Dendritic cell treated with granulocyte-macrophage colony-stimulating factor and Interleukin-4, amounts not matched to agents 40 ng/mL and 50 ng/mL, for 4 days (primary cell): ENCODE measurements at regions of chr6 and their contacts with region 1.

Region 1: GRCh38 chr6:75284632-75285286 is at the start of gene TMEM30A:
- H3K4me3 Mint-ChIP-seq: no peak within 1 kb of the TSS
- H3K27ac Mint-ChIP-seq: no peak within 1 kb of the TSS
- H3K4me1 Mint-ChIP-seq: peaks cover 38% of the 10 kb centered on the region
- H3K27me3 Mint-ChIP-seq: no peaks in the 10 kb centered on the region

Region 2: GRCh38 chr6:75243333-75244062 is 41.3 kb before region 1 on chr6 and contains the start of gene COX7A2:
- intact Hi-C with region 1: loop called (anchors 1 kb)
- H3K4me3 Mint-ChIP-seq: peak within 1 kb of the TSS; percentile 98
- H3K27ac Mint-ChIP-seq: peak within 1 kb of the TSS; percentile 99
- H3K4me1 Mint-ChIP-seq: peaks cover 24% of the 10 kb centered on the region
- H3K27me3 Mint-ChIP-seq: peaks cover 11% of the 10 kb centered on the region

Region 3: DNA sequence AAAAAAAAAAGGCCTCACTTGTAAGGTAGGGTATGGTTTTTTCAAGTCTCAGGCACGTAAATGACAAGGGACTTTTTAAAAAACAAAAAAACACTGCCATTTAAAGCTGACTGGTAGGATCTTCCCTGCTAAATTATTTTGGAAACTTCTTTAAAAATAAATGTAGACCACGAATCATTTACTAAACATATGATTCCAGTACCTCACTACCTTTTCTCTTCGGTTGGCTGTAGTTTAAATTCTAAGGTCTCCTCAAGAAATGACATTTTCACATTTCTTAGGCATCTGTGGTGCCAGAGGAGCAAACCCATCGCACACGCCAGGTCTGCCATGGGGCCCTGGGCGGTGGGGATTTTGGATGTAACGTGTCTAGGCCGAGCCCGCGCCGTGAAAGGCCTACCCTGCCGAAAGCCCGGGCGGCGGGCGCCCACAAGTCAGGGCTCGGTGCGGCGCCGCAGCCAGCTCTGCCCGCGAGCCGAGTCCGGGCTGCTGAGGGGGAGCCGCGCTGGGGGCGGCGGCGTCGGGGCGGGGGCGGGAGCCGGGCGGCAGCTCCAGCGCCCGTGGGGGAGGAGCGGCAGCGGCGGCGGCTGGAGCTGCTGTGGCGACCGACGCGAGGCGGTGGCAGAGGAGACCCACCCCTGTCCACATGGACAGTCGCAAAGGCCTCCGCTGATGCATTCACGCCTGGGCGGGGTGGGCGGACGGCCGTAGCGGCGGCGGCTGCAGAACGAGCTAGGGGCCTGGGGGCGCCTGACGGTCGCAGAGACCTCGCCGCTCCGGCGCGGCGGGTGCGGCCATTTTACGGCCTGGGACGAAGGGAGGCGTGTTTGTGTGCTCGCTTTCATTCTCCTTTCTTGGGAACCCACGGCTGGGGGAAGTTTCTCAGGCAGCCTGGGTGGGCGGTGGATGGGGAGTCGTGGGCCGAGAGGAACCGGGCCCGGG is 316.8 kb after region 1 on chr6 and contains the start of gene SENP6:
- intact Hi-C with region 1: loop called (anchors 5 kb)
- H3K4me3 Mint-ChIP-seq: peak within 1 kb of the TSS; percentile 93
- H3K27ac Mint-ChIP-seq: peak within 1 kb of the TSS; percentile 93
- H3K4me1 Mint-ChIP-seq: peaks cover 31% of the 10 kb centered on the region
- H3K27me3 Mint-ChIP-seq: peaks cover 2% of the 10 kb centered on the region